ENCODE measurements at regions of chr9 and their contacts with region 1.

Region 1: DNA sequence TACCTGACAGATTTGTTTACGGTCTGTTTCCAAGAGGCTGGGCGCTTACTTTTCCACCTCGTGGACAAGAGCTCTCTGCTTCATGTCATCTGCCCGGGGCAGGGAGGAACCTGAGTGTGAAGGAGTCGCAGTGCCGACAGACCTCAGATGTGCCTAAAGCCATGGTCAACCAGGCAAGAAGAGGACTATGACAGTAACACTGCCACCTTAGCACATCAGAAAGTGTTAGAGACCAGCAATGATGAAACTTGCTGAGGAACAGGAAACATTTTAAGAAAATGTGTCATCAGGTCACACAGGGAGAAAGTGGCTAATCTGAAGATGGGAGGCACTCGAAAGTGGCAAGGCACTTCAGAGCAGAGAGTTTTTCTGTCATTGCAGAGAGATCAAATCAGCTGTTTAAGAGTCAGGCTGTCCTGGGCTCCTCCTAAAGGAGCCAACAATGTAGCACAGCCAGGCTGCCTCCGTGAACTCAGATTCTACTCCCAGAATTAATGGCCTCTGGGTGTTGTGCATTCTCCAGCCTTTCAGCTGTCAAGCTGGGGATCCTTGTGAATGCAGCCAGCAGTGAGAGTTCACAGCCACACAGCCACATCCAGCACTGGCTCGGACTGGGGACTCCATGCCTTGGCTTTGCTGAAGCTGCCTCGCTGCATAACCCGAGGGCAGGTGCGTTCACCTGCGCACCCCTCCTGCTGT is 94.6 kb downstream of the RAPGEF1 start:
- DNase-seq: no peak
- H3K4me3 ChIP-seq: no peak overlapping the region
- H3K27ac ChIP-seq: peak overlapping the region; percentile 8 to 66 (median 50)
- H3K4me1 ChIP-seq: peaks cover 0 to 58% (median 43%) of the 10 kb centered on the region in 4 donors
- H3K27me3 ChIP-seq: no peaks in the 10 kb centered on the region
- CTCF ChIP-seq: no peak
- EP300 ChIP-seq: no peak
- POLR2A ChIP-seq: no peak

Region 2: GRCh38 chr9:131562032-131562959 is 82.9 kb before region 1 on chr9:
- intact Hi-C with region 1: no loop called
- DNase-seq: no peak
- H3K4me3 ChIP-seq: no peak overlapping the region
- H3K27ac ChIP-seq: no peak overlapping the region
- H3K4me1 ChIP-seq: no peaks in the 10 kb centered on the region
- H3K27me3 ChIP-seq: no peaks in the 10 kb centered on the region
- CTCF ChIP-seq: no peak
- EP300 ChIP-seq: no peak
- POLR2A ChIP-seq: no peak

Region 3: GRCh38 chr9:131670247-131671132 is 25.3 kb after region 1 on chr9:
- intact Hi-C with region 1: loop called (anchors 2 kb)
- DNase-seq: peak; percentile 90
- H3K4me3 ChIP-seq: no peak overlapping the region
- H3K27ac ChIP-seq: peak overlapping the region; percentile 67 to 86 (median 80)
- H3K4me1 ChIP-seq: peaks cover 0 to 67% (median 51%) of the 10 kb centered on the region in 4 donors
- H3K27me3 ChIP-seq: no peaks in the 10 kb centered on the region
- CTCF ChIP-seq: peak in 1 of 4 experiments; percentile 12
- EP300 ChIP-seq: peak; percentile 24 to 80 (median 42)
- POLR2A ChIP-seq: no peak

Region 4: DNA sequence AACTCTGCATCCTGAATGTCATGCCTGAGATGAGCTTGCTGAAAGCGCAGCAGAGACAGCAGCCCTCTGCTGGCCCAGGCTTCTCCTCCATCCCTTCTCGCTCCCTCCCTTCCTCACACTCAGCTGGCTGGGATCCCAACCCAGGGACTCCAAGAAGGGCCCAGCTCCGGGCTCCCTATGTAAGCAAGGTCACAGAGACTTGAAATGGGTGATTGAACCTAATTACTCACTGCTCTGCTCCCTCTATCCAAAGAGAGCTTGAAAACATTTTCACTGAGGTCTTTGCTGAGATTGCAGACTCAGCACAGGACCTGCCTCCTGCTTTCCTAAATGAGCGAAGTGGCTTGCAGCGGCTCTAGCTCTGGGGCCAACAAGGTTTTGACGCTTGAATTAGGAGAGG is 51.9 kb after region 1 on chr9:
- intact Hi-C with region 1: loop called (anchors 5 kb)
- DNase-seq: peak; percentile 87
- H3K4me3 ChIP-seq: no peak overlapping the region
- H3K27ac ChIP-seq: peak overlapping the region; percentile 3 to 60 (median 30)
- H3K4me1 ChIP-seq: peaks cover 0 to 75% (median 50%) of the 10 kb centered on the region in 4 donors
- H3K27me3 ChIP-seq: no peaks in the 10 kb centered on the region
- CTCF ChIP-seq: no peak
- EP300 ChIP-seq: no peak
- POLR2A ChIP-seq: no peak